Posterior vena cava (tissue), 2 donors: ENCODE measurements at regions of chr9 and their contacts with region 1.

Region 1: DNA sequence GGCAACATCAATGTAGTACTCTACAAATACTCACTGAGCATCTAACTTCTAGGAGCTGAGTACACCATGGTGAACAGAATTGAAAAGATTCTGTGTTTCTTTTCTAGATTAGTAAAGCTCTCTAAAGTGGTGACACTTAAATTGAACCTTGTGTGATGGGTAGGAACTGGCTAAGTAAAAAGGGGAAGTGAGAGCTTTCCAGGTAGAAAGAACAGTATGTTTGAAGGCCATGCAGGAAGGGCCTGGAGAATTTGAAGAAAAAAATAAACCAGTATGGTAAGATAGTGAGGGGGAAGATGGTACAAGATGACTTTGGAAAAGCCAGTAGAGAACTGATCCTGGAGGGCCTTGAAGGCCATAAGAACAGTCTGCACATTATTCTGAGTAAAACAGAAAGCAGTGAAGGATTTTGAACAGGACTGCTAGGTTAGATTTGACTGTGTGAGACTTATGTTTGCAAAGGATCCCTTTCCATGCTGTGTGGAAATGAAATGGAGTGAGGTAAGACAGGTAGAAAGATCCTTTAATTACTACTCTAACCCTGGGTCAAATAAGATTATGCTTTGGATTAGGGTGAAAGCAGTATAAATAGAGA is 46.7 kb upstream of the UBQLN1 start:
- DNase-seq: no peak

Region 2: GRCh38 chr9:83526901-83527300 is 227.6 kb before region 1 on chr9:
- intact Hi-C with region 1: no loop called
- DNase-seq: no peak

Region 3: GRCh38 chr9:83722686-83723085 is 31.8 kb before region 1 on chr9:
- intact Hi-C with region 1: no loop called
- DNase-seq: no peak

Region 4: DNA sequence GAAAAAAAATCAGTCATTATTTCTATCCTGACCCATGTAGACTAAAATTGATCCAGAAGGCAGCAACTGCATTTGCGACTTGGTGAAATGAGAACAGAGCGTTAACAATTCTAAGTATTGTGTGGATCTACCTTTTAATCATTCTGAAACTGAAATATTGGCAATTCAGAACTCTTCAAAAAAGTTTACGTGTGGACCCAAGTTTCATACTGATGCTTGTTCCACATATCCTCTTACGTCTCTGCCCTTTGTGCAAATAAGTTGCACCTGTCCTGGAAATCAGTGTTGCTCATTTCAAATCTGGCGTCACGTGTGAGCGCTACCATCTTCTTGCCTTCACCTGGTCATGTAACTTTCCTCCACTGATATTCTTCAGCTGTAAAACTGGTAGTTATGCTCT is 989.7 kb after region 1 on chr9:
- intact Hi-C with region 1: loop called in 1 of 2 experiments (anchors 5 kb)
- DNase-seq: no peak